ENCODE measurements at regions of chr1 and their contacts with region 1.

Region 1: DNA sequence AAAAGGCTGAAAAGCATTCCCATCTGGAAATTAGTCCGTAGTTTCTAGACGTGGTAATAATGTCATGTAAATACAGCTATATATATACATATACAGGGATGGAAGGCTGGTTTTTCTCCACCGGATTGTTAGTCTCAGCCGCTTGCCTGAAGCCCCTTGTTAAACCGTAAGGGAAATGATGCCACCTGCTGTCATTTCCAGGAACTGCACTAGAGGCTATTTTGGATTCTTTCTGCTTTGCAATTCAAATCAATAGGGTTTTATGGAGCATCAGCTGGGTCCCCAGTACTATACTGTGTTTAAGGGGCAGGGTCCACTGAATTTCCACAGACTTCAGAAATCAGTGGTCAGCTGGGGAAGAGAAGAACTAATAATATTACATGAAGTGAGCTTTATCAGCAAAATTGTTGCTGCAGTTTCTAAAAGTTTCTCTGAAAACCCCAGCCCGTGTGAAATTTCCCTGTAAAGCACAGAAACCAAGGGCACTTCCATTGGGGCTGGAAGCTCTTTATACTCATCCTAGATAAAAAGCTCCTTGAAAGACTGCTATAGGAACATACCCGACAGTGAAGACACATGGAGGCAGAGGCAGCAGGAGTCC is 33.8 kb upstream of the MPZL1 start:
- DNase-seq: peak; percentile 90
- ATAC-seq: peak; percentile 84
- H3K4me3 Mint-ChIP-seq: no peak overlapping the region
- H3K27ac Mint-ChIP-seq: peak overlapping the region; percentile 74
- H3K4me1 Mint-ChIP-seq: peaks cover 22% of the 10 kb centered on the region
- H3K27me3 Mint-ChIP-seq: no peaks in the 10 kb centered on the region
- CTCF ChIP-seq: peak; percentile 94

Region 2: DNA sequence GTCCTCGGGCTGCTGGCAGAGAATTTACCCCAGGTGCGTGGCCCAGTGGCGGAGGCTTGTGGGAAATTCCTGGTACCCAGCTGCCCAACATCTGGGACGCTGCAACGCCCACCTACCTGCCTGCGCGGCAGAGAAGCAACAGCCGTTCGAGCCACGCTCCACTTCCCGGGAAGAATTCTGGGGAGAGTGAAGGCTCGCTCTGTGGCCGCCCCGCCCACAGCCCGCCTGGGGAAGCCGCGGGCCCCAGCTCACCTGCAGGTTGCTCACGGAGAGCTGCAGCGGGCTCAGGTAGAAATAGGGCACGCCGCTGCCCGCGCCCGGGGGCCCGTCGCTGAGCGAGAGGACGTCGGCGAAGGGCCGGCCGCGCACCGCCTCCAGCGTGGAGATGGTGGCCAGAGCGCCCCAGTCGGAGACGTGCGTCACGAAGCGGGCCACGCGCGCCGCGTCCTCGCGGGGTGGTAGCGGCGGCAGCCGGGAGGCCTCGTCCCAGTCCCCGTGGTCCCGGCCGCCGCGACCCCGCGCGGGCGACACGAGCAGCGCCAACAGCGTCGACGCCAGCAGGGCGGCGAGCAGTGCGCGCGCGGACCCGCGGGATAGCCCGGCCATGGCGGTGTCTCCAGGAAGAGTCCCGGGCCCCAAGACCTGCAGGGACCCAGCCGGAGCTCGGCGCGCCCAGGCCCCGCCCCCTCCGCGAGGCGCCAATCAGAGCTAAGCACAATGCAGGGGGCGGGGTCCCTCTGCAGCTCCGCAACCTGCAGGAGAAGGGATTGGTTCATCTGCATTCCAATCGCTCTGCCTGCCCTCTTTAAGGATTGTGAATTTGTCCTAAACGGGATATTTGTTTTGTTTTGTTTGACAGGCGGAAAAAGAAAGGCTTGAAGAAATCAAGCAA is 134.6 kb before region 1 on chr1 and contains the start of gene CREG1:
- CTCF ChIA-PET with region 1: interaction called, 27 read pairs
- POLR2A ChIA-PET with region 1: interaction called, 3 read pairs
- intact Hi-C with region 1: no loop called
- DNase-seq: peak; percentile 92
- ATAC-seq: peak; percentile 100
- H3K4me3 Mint-ChIP-seq: peak within 1 kb of the TSS; percentile 86
- H3K27ac Mint-ChIP-seq: peak within 1 kb of the TSS; percentile 23
- H3K4me1 Mint-ChIP-seq: peaks cover 32% of the 10 kb centered on the region
- H3K27me3 Mint-ChIP-seq: no peaks in the 10 kb centered on the region
- CTCF ChIP-seq: no peak
- total RNA-seq, gene CREG1: 9.7 to 10.0 TPM

Region 3: GRCh38 chr1:167594822-167595221 is 93.2 kb before region 1 on chr1:
- CTCF ChIA-PET with region 1: interaction called, 155 read pairs
- POLR2A ChIA-PET with region 1: interaction called, 9 read pairs
- intact Hi-C with region 1: loop called (anchors 1 kb)
- DNase-seq: no peak
- ATAC-seq: no peak
- H3K4me3 Mint-ChIP-seq: no peak overlapping the region
- H3K27ac Mint-ChIP-seq: no peak overlapping the region
- H3K4me1 Mint-ChIP-seq: peaks cover 7% of the 10 kb centered on the region
- H3K27me3 Mint-ChIP-seq: no peaks in the 10 kb centered on the region
- CTCF ChIP-seq: no peak

Region 4: GRCh38 chr1:167627865-167628641 is 60.0 kb before region 1 on chr1:
- CTCF ChIA-PET with region 1: interaction called, 9 read pairs
- POLR2A ChIA-PET with region 1: no interaction called
- intact Hi-C with region 1: loop called (anchors 5 kb)
- DNase-seq: peak; percentile 90
- ATAC-seq: peak; percentile 79
- H3K4me3 Mint-ChIP-seq: peak overlapping the region; percentile 89
- H3K27ac Mint-ChIP-seq: peak overlapping the region; percentile 95
- H3K4me1 Mint-ChIP-seq: peaks cover 41% of the 10 kb centered on the region
- H3K27me3 Mint-ChIP-seq: no peaks in the 10 kb centered on the region
- CTCF ChIP-seq: no peak

Region 5: GRCh38 chr1:167650269-167651160 is 37.5 kb before region 1 on chr1:
- CTCF ChIA-PET with region 1: interaction called, 12 read pairs
- POLR2A ChIA-PET with region 1: interaction called, 3 read pairs
- intact Hi-C with region 1: no loop called
- DNase-seq: peak; percentile 41
- ATAC-seq: peak; percentile 68
- H3K4me3 Mint-ChIP-seq: peak overlapping the region; percentile 11
- H3K27ac Mint-ChIP-seq: peak overlapping the region; percentile 68
- H3K4me1 Mint-ChIP-seq: peaks cover 79% of the 10 kb centered on the region
- H3K27me3 Mint-ChIP-seq: no peaks in the 10 kb centered on the region
- CTCF ChIP-seq: no peak

Region 6: GRCh38 chr1:167676205-167676915 is 11.7 kb before region 1 on chr1:
- CTCF ChIA-PET with region 1: interaction called, 35 read pairs
- POLR2A ChIA-PET with region 1: interaction called, 4 read pairs
- intact Hi-C with region 1: no loop called
- DNase-seq: peak; percentile 19
- ATAC-seq: peak; percentile 67
- H3K4me3 Mint-ChIP-seq: no peak overlapping the region
- H3K27ac Mint-ChIP-seq: peak overlapping the region; percentile 53
- H3K4me1 Mint-ChIP-seq: peaks cover 32% of the 10 kb centered on the region
- H3K27me3 Mint-ChIP-seq: no peaks in the 10 kb centered on the region
- CTCF ChIP-seq: no peak

Region 7: GRCh38 chr1:167721617-167722151 is 33.7 kb after region 1 on chr1 and contains the start of gene MPZL1:
- CTCF ChIA-PET with region 1: no interaction called
- POLR2A ChIA-PET with region 1: no interaction called
- intact Hi-C with region 1: no loop called
- DNase-seq: peak; percentile 94
- ATAC-seq: peak; percentile 99
- H3K4me3 Mint-ChIP-seq: peak within 1 kb of the TSS; percentile 85
- H3K27ac Mint-ChIP-seq: peak within 1 kb of the TSS; percentile 80
- H3K4me1 Mint-ChIP-seq: peaks cover 48% of the 10 kb centered on the region
- H3K27me3 Mint-ChIP-seq: no peaks in the 10 kb centered on the region
- CTCF ChIP-seq: no peak
- total RNA-seq, gene MPZL1: 14.8 to 15.4 TPM

Region 8: GRCh38 chr1:167752219-167752985 is 64.4 kb after region 1 on chr1:
- CTCF ChIA-PET with region 1: no interaction called
- POLR2A ChIA-PET with region 1: no interaction called
- intact Hi-C with region 1: no loop called
- DNase-seq: no peak
- ATAC-seq: peak; percentile 70
- H3K4me3 Mint-ChIP-seq: no peak overlapping the region
- H3K27ac Mint-ChIP-seq: peak overlapping the region; percentile 6
- H3K4me1 Mint-ChIP-seq: peaks cover 21% of the 10 kb centered on the region
- H3K27me3 Mint-ChIP-seq: no peaks in the 10 kb centered on the region
- CTCF ChIP-seq: no peak

Region 9: DNA sequence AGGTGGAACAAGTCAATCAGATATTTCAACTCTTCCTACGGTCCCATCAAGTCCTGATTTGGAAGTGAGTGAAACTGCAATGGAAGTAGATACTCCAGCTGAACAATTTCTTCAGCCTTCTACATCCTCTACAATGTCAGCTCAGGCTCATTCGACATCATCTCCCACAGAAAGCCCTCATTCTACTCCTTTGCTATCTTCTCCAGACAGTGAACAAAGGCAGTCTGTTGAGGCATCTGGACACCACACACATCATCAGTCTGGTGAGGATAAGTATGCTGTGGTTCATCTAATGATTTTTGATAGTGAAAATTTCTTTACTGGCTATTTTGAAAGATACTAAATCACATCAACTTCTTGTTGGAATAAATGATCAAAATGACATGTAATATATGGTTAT is 316.5 kb after region 1 on chr1:
- CTCF ChIA-PET with region 1: no interaction called
- POLR2A ChIA-PET with region 1: no interaction called
- intact Hi-C with region 1: no loop called
- DNase-seq: no peak
- ATAC-seq: no peak
- H3K4me3 Mint-ChIP-seq: no peak overlapping the region
- H3K27ac Mint-ChIP-seq: no peak overlapping the region
- H3K4me1 Mint-ChIP-seq: no peaks in the 10 kb centered on the region
- H3K27me3 Mint-ChIP-seq: no peaks in the 10 kb centered on the region
- CTCF ChIP-seq: no peak